ENCODE measurements at regions of chr22 and their contacts with region 1.

Region 1: DNA sequence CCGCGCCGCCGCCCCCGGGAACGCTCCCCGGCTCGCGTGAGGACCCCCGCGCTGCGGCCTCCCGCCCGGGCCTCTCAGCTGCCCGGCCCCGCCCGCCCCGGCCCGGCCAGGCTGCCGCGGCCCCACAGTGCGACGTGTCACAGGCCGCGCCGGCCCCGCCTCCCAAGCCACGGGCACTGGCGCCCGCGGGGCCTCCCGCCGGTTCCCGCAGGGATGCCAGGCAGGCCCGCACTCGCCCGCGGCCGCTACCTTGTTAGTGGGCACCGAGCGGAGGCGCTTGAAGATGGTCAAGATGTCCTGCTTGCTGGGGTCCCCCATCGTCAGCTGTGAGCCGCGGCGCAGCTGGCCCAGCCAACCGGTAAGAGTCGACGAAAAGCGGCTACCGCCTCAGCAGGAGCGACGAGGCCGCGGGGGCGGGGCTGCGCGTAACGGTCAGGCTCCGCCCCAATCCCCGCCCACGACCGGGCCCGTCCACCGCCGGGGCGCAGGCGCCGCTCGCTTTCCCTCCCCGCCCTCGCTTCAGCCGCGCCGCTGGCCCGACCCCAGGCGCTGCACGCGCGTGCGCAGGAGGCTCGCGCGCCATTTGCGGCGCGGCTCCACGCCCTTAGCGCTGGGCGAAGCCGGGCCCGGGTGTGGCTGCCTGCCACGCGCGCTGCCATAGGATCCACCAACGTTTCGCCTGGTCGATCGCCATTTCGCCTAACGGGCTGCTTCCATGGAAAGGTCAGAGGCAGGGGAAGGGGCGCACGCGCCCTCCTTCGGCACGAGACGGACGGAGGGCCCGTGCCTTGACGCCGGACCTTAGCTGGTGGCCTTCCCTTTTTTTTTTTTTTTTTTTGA is at the start of gene ARFGAP3:
- DNase-seq: peak; percentile 95
- H3K4me3 Mint-ChIP-seq: peak within 1 kb of the TSS; percentile 81
- H3K27ac Mint-ChIP-seq: peak within 1 kb of the TSS; percentile 86
- H3K4me1 Mint-ChIP-seq: peaks cover 8% of the 10 kb centered on the region
- H3K27me3 Mint-ChIP-seq: no peaks in the 10 kb centered on the region
- total RNA-seq, gene ARFGAP3: 41.1 to 42.1 TPM

Region 2: GRCh38 chr22:42868751-42869251 is 11.7 kb after region 1 on chr22:
- CTCF ChIA-PET with region 1: interaction called, 27 read pairs
- POLR2A ChIA-PET with region 1: interaction called, 4 read pairs
- DNase-seq: no peak
- H3K4me3 Mint-ChIP-seq: no peak overlapping the region
- H3K27ac Mint-ChIP-seq: no peak overlapping the region
- H3K4me1 Mint-ChIP-seq: peaks cover 3% of the 10 kb centered on the region
- H3K27me3 Mint-ChIP-seq: no peaks in the 10 kb centered on the region

Region 3: GRCh38 chr22:43014869-43015676 is 158.0 kb after region 1 on chr22 and contains the start of gene PACSIN2:
- CTCF ChIA-PET with region 1: no interaction called
- POLR2A ChIA-PET with region 1: interaction called, 10 read pairs
- DNase-seq: peak; percentile 99
- H3K4me3 Mint-ChIP-seq: peak within 1 kb of the TSS; percentile 93
- H3K27ac Mint-ChIP-seq: peak within 1 kb of the TSS; percentile 69
- H3K4me1 Mint-ChIP-seq: peaks cover 24% of the 10 kb centered on the region
- H3K27me3 Mint-ChIP-seq: peaks cover 2% of the 10 kb centered on the region
- total RNA-seq, gene PACSIN2: 33.5 to 35.1 TPM

Measured in activated CD4-positive, alpha-beta memory T cell treated with anti-CD3 and anti-CD28 coated beads, Interleukin-2, amount 10 ng/mL, durations not matched to agents 7 days and 5 days (primary cell).